ENCODE measurements at regions of chr14 and their contacts with region 1.

Region 1: GRCh38 chr14:99604283-99604765 is 317 bp upstream of the CCDC85C start:
- DNase-seq: peak; percentile 94
- H3K4me3 Mint-ChIP-seq: peak overlapping the region; percentile 73
- H3K27ac Mint-ChIP-seq: peak overlapping the region; percentile 50
- H3K4me1 Mint-ChIP-seq: peaks cover 22% of the 10 kb centered on the region
- H3K27me3 Mint-ChIP-seq: no peaks in the 10 kb centered on the region
- CTCF ChIP-seq: no peak

Region 2: DNA sequence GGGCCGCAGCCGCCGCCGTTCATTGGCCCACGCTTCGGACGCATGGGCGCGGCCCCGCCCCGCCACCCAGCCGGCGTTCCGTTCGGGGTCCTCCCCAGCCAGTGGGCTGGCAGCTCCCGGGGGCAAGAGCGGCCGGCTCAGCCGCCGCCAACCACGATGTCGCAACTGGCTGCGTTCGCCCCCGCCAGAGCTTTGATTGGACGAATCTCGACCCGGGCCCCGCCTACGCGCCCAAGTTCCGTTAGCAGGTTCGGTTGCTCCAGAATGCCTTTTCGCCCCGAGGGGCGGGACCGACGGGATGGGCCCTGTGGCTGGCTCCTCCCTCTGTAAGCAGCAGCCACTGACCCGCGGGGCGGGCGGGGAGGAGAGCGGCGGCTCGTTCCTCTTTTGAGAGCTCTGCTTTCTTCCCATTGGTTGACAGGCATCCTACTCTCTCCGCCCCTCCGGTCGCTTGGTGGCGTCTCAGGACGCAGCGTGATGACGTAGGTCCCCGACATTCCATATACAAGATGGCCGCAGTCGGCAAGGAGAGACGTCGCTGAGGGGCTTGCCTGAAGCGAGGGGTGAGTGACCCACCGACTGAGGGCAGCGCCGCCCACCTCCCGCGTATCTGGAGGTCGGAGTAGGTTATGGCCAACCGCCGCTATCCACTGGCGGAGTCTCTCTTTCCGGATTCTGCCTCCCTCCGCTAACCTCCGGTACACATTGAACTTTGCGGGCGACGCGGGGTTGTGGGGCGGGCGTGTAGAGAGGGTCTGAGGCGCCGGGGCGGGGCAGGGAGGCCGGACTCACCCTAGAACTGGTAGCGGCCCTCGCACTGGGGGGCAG is 123.2 kb before region 1 on chr14 and contains the start of gene CCNK:
- CTCF ChIA-PET with region 1: interaction called, 3 read pairs
- POLR2A ChIA-PET with region 1: interaction called, 32 read pairs
- intact Hi-C with region 1: no loop called
- DNase-seq: peak; percentile 99
- H3K4me3 Mint-ChIP-seq: peak within 1 kb of the TSS; percentile 95
- H3K27ac Mint-ChIP-seq: peak within 1 kb of the TSS; percentile 97
- H3K4me1 Mint-ChIP-seq: peaks cover 38% of the 10 kb centered on the region
- H3K27me3 Mint-ChIP-seq: no peaks in the 10 kb centered on the region
- CTCF ChIP-seq: no peak
- total RNA-seq, gene CCNK: 70.4 and 87.7 TPM in 2 replicates

Region 3: GRCh38 chr14:99563233-99564129 is 40.8 kb before region 1 on chr14:
- CTCF ChIA-PET with region 1: interaction called, 4 read pairs
- POLR2A ChIA-PET with region 1: interaction called, 7 read pairs
- intact Hi-C with region 1: loop called (anchors 2 kb)
- DNase-seq: peak; percentile 85
- H3K4me3 Mint-ChIP-seq: no peak overlapping the region
- H3K27ac Mint-ChIP-seq: no peak overlapping the region
- H3K4me1 Mint-ChIP-seq: peaks cover 33% of the 10 kb centered on the region
- H3K27me3 Mint-ChIP-seq: no peaks in the 10 kb centered on the region
- CTCF ChIP-seq: peak; percentile 30

Region 4: GRCh38 chr14:99575043-99576023 is 29.0 kb before region 1 on chr14:
- CTCF ChIA-PET with region 1: interaction called, 18 read pairs
- POLR2A ChIA-PET with region 1: interaction called, 57 read pairs
- intact Hi-C with region 1: no loop called
- DNase-seq: peak; percentile 86
- H3K4me3 Mint-ChIP-seq: peak overlapping the region; percentile 37
- H3K27ac Mint-ChIP-seq: peak overlapping the region; percentile 82
- H3K4me1 Mint-ChIP-seq: peaks cover 60% of the 10 kb centered on the region
- H3K27me3 Mint-ChIP-seq: no peaks in the 10 kb centered on the region
- CTCF ChIP-seq: peak; percentile 37

Measured in MCF 10A (cell line).